Left ventricle myocardium inferior (tissue), 1 donor: ENCODE measurements at regions of chr13 and their contacts with region 1.

Region 1: DNA sequence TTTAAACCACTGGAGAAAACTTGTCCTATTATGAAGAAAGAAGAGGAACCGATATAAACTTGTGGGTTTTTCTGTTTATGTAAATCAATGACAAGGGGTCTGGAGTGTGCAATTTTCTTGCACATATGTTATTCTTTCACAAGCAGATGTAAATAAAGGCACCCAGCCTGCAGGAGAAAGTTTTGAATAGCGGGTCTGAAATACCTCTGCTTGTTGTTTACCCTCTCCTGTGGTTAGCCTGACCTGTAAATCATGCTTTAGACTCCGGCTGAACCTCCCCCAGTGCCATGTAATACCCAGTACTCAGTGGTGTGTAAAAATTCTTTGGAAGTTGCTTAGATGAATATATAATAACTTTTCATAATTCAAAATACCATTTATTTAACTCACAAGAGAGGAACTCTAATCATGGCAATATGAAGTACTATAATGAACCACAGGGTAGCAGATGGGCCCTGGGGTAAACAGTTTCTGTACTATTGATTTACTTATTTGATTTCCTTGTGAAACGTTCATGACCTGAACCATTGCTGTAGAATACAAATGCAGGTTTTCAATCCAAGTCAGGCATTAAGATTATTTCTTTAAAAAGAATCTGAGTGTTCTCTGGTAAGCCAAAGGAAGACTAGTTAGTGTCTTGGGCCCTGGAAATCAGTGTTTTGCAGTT is 245.1 kb downstream of the LMO7 start:
- DNase-seq: no peak
- H3K4me3 ChIP-seq: no peak overlapping the region
- H3K27ac ChIP-seq: no peak overlapping the region
- H3K4me1 ChIP-seq: peaks cover 4% of the 10 kb centered on the region
- H3K27me3 ChIP-seq: no peaks in the 10 kb centered on the region
- CTCF ChIP-seq: no peak

Region 2: GRCh38 chr13:76016799-76017400 is 135.7 kb after region 1 on chr13:
- intact Hi-C with region 1: loop called (anchors 10 kb)
- DNase-seq: no peak
- H3K4me3 ChIP-seq: no peak overlapping the region
- H3K27ac ChIP-seq: no peak overlapping the region
- H3K4me1 ChIP-seq: peaks cover 26% of the 10 kb centered on the region
- H3K27me3 ChIP-seq: no peaks in the 10 kb centered on the region
- CTCF ChIP-seq: peak; percentile 55

Region 3: GRCh38 chr13:76266561-76266960 is 385.3 kb after region 1 on chr13:
- intact Hi-C with region 1: no loop called
- DNase-seq: no peak
- H3K4me3 ChIP-seq: no peak overlapping the region
- H3K27ac ChIP-seq: no peak overlapping the region
- H3K4me1 ChIP-seq: no peaks in the 10 kb centered on the region
- H3K27me3 ChIP-seq: no peaks in the 10 kb centered on the region
- CTCF ChIP-seq: no peak